OCI-LY7 (cell line): ENCODE measurements at regions of chr3 and their contacts with region 1.

Region 1: DNA sequence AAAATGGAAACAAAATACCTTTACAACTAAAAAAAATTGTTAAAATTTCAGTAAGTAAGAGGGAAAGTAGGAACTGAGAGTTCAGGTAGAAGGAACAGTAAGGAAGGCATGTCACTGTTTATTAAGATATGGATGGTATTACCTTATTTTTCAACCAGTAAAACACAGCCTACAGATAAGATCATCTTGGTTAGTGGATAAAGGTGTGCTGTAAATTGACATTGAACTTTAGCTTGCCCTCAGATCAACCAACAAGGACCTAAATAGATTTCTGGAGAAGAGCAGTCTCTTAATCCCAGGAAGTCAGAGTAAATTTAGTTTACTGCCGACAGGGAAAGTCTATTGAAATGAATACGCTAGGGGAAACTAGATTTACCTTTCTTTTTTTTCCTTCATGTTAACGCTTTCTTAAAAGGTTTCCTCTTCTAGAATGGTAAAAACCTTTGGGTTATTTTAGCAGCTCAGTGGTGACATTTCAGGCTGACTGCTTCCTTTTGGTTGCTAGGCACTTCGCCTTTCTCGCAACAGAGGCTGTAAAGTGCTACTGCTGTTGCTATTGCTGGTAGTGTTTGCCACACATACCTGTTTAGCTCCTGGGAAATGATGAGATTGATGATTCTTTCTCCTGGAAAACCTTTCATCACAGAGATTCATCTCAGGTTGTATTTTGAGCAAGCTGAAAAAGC is 12.9 kb downstream of the DZIP3 start:
- DNase-seq: no peak
- H3K4me3 ChIP-seq: no peak overlapping the region
- H3K27ac ChIP-seq: no peak overlapping the region
- H3K4me1 ChIP-seq: peaks cover 8% of the 10 kb centered on the region
- CTCF ChIP-seq: no peak

Region 2: GRCh38 chr3:108645364-108645763 is 43.0 kb after region 1 on chr3:
- CTCF ChIA-PET with region 1: no interaction called
- POLR2A ChIA-PET with region 1: interaction called, 11 read pairs
- intact Hi-C with region 1: no loop called
- DNase-seq: no peak
- H3K4me3 ChIP-seq: no peak overlapping the region
- H3K27ac ChIP-seq: no peak overlapping the region
- H3K4me1 ChIP-seq: no peaks in the 10 kb centered on the region
- CTCF ChIP-seq: no peak